A549 (cell line): ENCODE measurements at regions of chr5 and their contacts with region 1.

Region 1: DNA sequence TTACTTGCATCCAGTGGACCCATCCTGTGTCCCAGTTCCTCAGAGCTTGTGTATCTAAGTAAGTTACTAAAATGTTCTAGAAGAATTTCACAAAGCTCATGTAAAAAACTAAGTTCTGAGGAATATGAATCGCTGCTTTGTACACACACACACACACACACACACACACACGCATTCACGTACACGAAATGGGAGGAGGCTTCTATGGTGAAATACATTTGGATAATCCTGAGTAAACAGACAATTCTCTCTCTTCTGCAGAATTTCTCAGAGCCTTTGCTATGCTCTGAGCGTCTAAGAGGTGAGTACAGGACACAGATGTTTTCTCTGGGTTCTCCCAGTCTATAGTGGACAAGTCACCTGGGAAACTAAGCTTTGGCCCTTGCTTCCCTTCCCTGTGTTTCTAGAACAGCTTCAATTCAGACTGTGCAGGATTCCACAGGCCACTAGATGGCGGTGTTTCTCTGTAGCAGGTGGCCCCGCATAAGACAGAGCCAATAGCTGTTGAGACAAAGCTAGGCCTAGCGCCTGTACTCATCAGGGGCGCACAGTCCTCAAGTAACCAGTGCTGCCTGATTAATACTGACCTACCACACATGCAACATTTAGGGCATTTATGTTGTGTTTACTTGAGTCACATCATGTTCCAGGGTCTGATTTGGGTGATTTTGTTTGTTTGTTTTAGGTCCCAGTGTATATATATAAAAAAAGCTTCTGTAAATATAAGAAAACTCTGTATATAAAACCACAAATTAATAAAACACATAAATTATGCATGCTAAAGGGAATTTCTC is 114.8 kb downstream of the LIFR start:
- DNase-seq: peak; percentile 82 to 92
- ATAC-seq: peak; percentile 99 to 100
- H3K4me3 ChIP-seq: no peak overlapping the region
- H3K27ac ChIP-seq: 0 out of 6 replicates have a peak overlapping the region, but pooled peaks of 1 of the 2 experiments have one; percentile 43
- H3K4me1 ChIP-seq: peaks cover 3% of the 10 kb centered on the region; the same call in 1 of the 3 replicates
- CTCF ChIP-seq: peak; percentile 97
- EP300 ChIP-seq: no peak
- POLR2A ChIP-seq: no peak
- RAD21 ChIP-seq: peak; percentile 99 to 100

Region 2: DNA sequence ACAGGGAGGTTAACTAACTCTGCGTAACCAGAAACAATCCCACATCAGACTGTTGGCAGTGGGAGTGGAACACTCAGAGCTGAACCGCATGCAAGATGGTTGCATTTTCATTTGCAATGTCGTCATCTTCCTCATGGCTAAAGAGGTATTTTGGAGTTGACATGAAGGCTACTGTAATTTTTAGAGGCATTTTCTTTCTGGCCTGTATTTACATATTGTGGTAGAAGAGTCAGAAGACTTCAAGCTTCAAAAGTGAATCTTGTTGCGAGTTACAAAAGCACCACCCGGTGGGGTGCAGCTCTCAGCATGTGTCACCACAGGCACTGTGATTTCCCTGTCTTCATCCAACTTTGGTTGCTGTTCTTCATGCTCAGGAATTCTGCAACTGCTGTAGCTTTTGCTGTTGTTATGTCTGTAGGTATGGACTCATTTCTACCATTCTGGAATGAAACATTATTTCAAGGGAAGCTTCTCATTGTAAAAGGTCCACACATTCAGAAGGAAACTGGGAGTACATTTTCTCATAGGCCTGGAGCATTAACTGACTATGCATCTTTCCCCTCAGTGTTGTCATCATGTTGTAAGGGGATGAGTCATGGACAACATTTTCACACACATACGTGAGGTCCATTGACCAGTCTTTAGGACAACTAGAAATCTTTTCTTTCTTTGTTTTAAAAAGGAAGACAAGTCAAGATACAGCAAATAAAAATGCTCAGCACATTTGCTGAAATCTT is 566.4 kb before region 1 on chr5:
- CTCF ChIA-PET with region 1: no interaction called
- POLR2A ChIA-PET with region 1: no interaction called
- DNase-seq: no peak
- ATAC-seq: no peak
- H3K4me3 ChIP-seq: no peak overlapping the region
- H3K27ac ChIP-seq: no peak overlapping the region
- H3K4me1 ChIP-seq: no peaks in the 10 kb centered on the region
- CTCF ChIP-seq: no peak
- EP300 ChIP-seq: no peak
- POLR2A ChIP-seq: no peak
- RAD21 ChIP-seq: no peak

Region 3: GRCh38 chr5:38453506-38453905 is 11.9 kb after region 1 on chr5:
- CTCF ChIA-PET with region 1: interaction called, 47 read pairs
- POLR2A ChIA-PET with region 1: no interaction called
- DNase-seq: no peak
- ATAC-seq: no peak
- H3K4me3 ChIP-seq: no peak overlapping the region
- H3K27ac ChIP-seq: no peak overlapping the region
- H3K4me1 ChIP-seq: no peaks in the 10 kb centered on the region
- CTCF ChIP-seq: no peak
- EP300 ChIP-seq: no peak
- POLR2A ChIP-seq: no peak
- RAD21 ChIP-seq: no peak

Region 4: GRCh38 chr5:38540314-38540713 is 98.7 kb after region 1 on chr5:
- CTCF ChIA-PET with region 1: interaction called, 67 read pairs
- POLR2A ChIA-PET with region 1: no interaction called
- DNase-seq: no peak
- ATAC-seq: no peak
- H3K4me3 ChIP-seq: no peak overlapping the region
- H3K27ac ChIP-seq: no peak overlapping the region
- H3K4me1 ChIP-seq: peaks cover 13% of the 10 kb centered on the region
- CTCF ChIP-seq: no peak
- EP300 ChIP-seq: no peak
- POLR2A ChIP-seq: no peak
- RAD21 ChIP-seq: no peak

Region 5: DNA sequence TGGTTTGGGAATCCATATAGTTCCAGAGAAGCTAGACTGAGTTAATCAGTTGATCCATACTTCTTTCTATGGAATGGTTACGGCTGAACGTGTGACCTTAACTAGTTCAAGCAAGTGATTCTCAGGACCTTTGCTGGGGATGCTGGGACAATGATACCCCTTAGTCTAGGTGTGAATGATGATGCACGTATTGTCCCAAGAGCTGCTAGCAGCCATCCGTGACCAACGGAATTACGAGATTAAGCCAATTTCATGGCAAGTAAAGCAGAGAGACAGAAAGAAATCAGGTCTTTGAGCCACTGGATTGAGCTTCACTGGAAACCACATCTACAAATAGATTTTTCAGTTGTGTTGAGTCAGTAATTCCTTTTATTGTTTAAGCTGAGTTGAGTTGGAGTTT is 214.0 kb after region 1 on chr5:
- CTCF ChIA-PET with region 1: interaction called, 10 read pairs
- POLR2A ChIA-PET with region 1: no interaction called
- DNase-seq: no peak
- ATAC-seq: no peak
- H3K4me3 ChIP-seq: no peak overlapping the region
- H3K27ac ChIP-seq: no peak overlapping the region
- H3K4me1 ChIP-seq: peaks cover 1% of the 10 kb centered on the region; the same call in 2 of the 3 replicates
- CTCF ChIP-seq: no peak
- EP300 ChIP-seq: no peak
- POLR2A ChIP-seq: no peak
- RAD21 ChIP-seq: no peak

Region 6: DNA sequence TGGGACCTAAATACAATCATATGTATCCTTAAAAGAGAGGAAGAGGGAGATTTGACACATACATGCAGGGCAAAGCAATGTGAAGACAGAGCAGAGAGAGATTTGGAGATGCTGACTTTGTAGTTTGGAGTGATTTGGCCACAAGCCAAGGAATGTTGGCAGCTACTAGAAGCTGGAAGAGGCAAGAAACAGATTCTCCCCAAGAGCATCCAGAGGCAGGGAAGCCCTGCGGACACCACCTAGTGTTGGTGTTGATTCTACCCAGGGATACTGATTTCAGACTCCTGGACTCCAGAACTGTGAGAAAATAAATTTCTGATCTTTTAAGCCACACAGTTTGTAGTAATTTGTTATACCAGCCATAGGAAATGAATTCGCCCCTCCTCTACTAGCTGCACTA is 339.3 kb after region 1 on chr5:
- CTCF ChIA-PET with region 1: interaction called, 21 read pairs
- POLR2A ChIA-PET with region 1: no interaction called
- DNase-seq: peak in 1 of 2 experiments; percentile 39
- ATAC-seq: peak in 1 of 2 experiments; percentile 76; a peak in 3 of 6 replicates
- H3K4me3 ChIP-seq: no peak overlapping the region
- H3K27ac ChIP-seq: no peak overlapping the region
- H3K4me1 ChIP-seq: peaks cover 16% of the 10 kb centered on the region
- CTCF ChIP-seq: peak; percentile 16; the same call in 1 of the 3 replicates
- EP300 ChIP-seq: no peak
- POLR2A ChIP-seq: no peak
- RAD21 ChIP-seq: peak; percentile 18 to 21; a peak in 1 of 5 replicates

Region 7: DNA sequence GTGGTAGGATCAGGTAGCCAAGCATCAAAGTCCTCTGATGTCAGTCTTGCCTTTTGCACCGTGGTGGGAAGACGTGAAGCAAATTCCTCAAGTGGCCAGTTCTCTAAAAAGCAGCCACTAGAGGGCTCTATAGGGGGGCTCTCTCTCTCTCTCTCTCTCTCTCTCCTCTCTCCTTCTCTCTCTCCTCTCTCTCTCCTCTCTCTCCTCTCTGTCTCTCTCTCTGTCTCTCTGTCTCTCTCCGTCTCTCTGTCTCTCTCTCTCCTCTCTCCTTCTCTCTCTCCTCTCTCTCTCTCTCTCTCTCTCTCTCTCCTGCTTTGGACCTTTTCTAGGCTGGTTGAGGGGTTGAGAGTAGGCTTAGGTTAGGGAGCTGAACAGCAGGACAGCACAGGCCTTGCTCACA is 390.3 kb after region 1 on chr5:
- CTCF ChIA-PET with region 1: interaction called, 10 read pairs
- POLR2A ChIA-PET with region 1: no interaction called
- DNase-seq: peak in 1 of 2 experiments; percentile 66
- ATAC-seq: peak; percentile 52 to 78; a peak in 3 of 6 replicates
- H3K4me3 ChIP-seq: no peak overlapping the region
- H3K27ac ChIP-seq: 0 out of 6 replicates have a peak overlapping the region, but pooled peaks of 1 of the 2 experiments have one; percentile 11
- H3K4me1 ChIP-seq: peaks cover 19% of the 10 kb centered on the region; the same call in 2 of the 3 replicates
- CTCF ChIP-seq: peak; percentile 50
- EP300 ChIP-seq: no peak
- POLR2A ChIP-seq: no peak
- RAD21 ChIP-seq: peak; percentile 31 to 48; a peak in 3 of 5 replicates